Activated naive CD4-positive, alpha-beta T cell treated with anti-CD3 and anti-CD28 coated beads for 36 hours (primary cell): ENCODE measurements at regions of chr4 and their contacts with region 1.

Region 1: GRCh38 chr4:82559736-82560120 is 2.1 kb downstream of the TMEM150C start:
- DNase-seq: no peak
- H3K4me3 Mint-ChIP-seq: no peak overlapping the region
- H3K27ac Mint-ChIP-seq: no peak overlapping the region
- H3K4me1 Mint-ChIP-seq: peaks cover 11% of the 10 kb centered on the region
- H3K27me3 Mint-ChIP-seq: peaks cover 52% of the 10 kb centered on the region

Region 2: GRCh38 chr4:82462415-82462831 is 97.3 kb before region 1 on chr4:
- CTCF ChIA-PET with region 1: no interaction called
- intact Hi-C with region 1: no loop called
- DNase-seq: peak; percentile 93
- H3K4me3 Mint-ChIP-seq: no peak overlapping the region
- H3K27ac Mint-ChIP-seq: no peak overlapping the region
- H3K4me1 Mint-ChIP-seq: peaks cover 2% of the 10 kb centered on the region
- H3K27me3 Mint-ChIP-seq: no peaks in the 10 kb centered on the region

Region 3: DNA sequence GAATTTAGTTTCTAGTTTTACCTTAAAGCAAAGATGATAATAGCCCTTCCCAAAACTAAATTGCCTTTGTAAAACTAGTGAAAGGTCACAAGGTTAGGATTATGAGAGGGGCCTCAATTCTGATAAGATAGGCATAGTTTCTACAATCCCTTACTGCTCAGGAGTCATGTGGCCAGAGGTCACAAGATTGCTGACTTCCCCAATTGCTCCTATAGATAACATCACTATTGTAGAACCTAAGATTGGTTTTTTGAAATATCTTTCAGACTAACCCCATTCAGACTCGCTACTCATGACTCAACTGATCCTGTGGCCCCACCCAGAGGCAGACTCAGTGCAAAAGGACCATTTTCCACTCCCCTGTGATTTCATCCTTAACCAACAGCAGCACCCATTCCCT is 168.6 kb after region 1 on chr4:
- CTCF ChIA-PET with region 1: interaction called, 10 read pairs
- intact Hi-C with region 1: no loop called
- DNase-seq: no peak
- H3K4me3 Mint-ChIP-seq: no peak overlapping the region
- H3K27ac Mint-ChIP-seq: no peak overlapping the region
- H3K4me1 Mint-ChIP-seq: no peaks in the 10 kb centered on the region
- H3K27me3 Mint-ChIP-seq: no peaks in the 10 kb centered on the region